ENCODE measurements at regions of chr6 and their contacts with region 1.

Region 1: GRCh38 chr6:111651185-111652034 is 45.7 kb upstream of the TRAF3IP2 start:
- DNase-seq: no peak
- H3K4me3 ChIP-seq: no peak overlapping the region
- CTCF ChIP-seq: no peak

Region 2: GRCh38 chr6:111406200-111406721 is 245.1 kb before region 1 on chr6:
- in situ Hi-C with region 1: no loop called
- DNase-seq: no peak
- H3K4me3 ChIP-seq: no peak overlapping the region
- CTCF ChIP-seq: no peak

Region 3: DNA sequence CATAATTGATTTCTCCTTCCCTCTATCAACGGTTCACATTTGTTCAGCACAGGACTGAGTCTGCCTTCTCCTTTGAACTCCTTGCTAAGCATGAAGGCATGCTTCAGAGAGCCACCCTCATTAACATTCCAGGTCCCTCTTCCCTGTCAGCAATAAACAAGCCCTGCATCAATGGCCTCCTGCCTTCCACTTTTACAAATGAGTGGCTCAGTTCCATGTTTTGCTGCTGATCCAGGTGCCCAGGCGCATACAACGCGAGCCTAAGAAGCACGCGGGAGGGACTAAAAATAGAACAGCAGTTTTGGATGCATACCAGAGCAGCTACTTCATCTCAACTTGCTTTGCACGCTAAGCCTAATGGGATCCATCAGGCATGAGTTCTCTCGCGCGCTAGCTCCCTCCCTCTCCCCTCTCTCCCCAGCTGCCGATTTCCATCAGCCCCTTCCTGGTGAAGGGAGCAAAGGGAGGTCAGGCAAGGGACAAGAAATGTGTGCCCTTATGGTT is 99.1 kb before region 1 on chr6:
- in situ Hi-C with region 1: no loop called
- DNase-seq: peak; percentile 97
- H3K4me3 ChIP-seq: no peak overlapping the region
- CTCF ChIP-seq: no peak

Region 4: GRCh38 chr6:111686249-111686931 is 35.0 kb after region 1 on chr6:
- in situ Hi-C with region 1: loop called (anchors 5 kb)
- DNase-seq: no peak
- H3K4me3 ChIP-seq: no peak overlapping the region
- CTCF ChIP-seq: no peak

Region 5: DNA sequence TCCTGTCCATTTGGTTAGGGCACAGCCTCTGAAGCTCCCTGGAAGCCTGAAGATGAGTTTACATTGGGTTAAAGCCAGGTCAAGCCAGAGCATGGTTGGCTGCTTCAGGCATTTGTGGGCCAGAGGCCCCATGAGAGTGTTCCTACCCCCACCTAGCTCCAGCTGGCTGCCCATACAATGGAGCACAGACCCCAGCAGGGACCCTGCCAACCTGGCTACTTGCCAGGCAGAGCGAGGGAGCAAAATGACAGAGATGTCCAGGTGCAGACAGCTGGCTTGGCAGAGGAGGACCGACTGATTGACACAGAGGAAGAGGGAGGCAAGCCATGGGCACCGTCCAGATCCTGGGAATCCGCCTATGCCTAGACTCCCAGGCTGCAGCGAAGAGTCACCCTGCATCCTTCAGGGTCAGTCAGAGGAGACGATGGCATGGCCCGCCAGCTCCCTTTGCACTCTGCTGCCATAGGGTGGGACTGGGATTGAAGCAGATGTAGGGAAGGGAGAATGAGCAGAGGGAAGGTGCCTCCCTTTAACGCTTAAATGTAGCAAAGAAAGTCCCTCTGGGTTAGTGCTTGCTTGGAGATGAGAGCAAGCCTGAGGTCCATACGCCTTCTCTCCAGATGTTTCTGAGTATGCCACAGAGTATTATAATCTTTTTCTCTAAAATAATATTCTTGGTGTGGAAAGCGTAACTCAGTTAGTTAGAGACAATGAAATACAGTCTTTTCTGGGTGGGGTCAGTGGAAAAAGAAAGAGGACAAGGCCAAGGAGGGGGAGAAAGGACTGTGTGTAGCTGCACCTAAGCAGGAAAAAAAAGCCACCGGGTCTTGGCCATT is 299.5 kb after region 1 on chr6:
- in situ Hi-C with region 1: no loop called
- DNase-seq: no peak
- H3K4me3 ChIP-seq: no peak overlapping the region
- CTCF ChIP-seq: no peak

Region 6: DNA sequence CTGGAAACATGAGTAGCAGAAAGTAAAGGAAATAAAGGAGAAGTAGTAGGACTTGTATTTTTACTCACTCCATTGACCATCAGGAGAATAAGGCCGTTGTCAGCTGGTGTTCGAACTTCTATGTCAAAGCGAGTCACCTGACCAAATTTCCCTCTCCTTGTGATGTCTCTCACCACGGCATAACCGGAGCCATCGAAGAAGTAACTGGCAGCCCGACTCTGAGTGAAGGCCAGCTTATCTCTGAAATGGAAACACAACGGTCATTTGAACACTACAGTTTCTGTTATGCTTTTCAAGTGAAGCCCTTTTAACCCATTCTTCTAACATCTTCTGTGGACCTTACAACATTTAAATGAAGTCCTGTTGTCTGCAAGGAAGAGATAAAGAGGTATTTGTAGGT is 487.6 kb after region 1 on chr6:
- in situ Hi-C with region 1: no loop called
- DNase-seq: no peak
- H3K4me3 ChIP-seq: no peak overlapping the region
- CTCF ChIP-seq: no peak

Measured in astrocyte of the cerebellum (primary cell).